Heart right ventricle (tissue), 16 donors: ENCODE measurements at regions of chr4 and their contacts with region 1.

Region 1: DNA sequence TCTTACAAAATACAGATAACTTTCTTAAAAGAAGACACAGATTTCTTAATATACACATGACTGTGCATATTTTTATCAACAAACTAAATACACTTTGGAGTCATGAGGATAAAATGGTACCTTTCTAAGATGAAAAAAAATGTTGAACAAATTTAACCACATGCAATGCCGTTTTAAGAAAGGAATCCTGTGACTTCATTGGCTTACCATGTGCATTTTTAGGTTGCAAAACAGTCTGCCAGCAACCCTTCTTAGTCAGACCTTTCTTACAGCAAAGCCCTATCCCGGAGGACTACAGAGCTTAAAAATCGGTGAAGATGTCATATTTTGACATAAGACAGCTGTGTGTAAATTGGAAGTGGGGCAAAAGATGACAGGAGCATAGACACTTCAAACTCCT is 51.6 kb downstream of the GASK1B start:
- DNase-seq: peak in 1 of 2 donors; percentile 36
- ATAC-seq: peak; percentile 76 to 90 (median 86)
- H3K4me3 ChIP-seq: peak overlapping the region in 1 of 10 donors; percentile 10
- H3K27ac ChIP-seq: peak overlapping the region in 7 of 10 donors; percentile 13 to 70 (median 57)
- H3K4me1 ChIP-seq: peaks cover 0 to 38% (median 13%) of the 10 kb centered on the region in 9 donors
- H3K27me3 ChIP-seq: no peaks in the 10 kb centered on the region
- CTCF ChIP-seq: no peak

Region 2: GRCh38 chr4:158161551-158162354 is 40.6 kb after region 1 on chr4:
- intact Hi-C with region 1: loop called in 1 of 10 experiments (anchors 5 kb)
- DNase-seq: peak in 1 of 2 donors; percentile 56
- ATAC-seq: peak; percentile 50 to 89 (median 68)
- H3K4me3 ChIP-seq: peak overlapping the region in 4 of 10 donors; percentile 6 to 28 (median 13)
- H3K27ac ChIP-seq: peak overlapping the region; percentile 15 to 95 (median 63)
- H3K4me1 ChIP-seq: peaks cover 12 to 100% (median 93%) of the 10 kb centered on the region in 9 donors
- H3K27me3 ChIP-seq: no peaks in the 10 kb centered on the region
- CTCF ChIP-seq: no peak